Posterior vena cava (tissue), 2 donors: ENCODE measurements at regions of chr6 and their contacts with region 1.

Region 1: GRCh38 chr6:1179571-1180459 is 132.1 kb upstream of the FOXQ1 start:
- DNase-seq: no peak

Region 2: GRCh38 chr6:599576-600448 is 580.0 kb before region 1 on chr6:
- intact Hi-C with region 1: loop called in 1 of 2 experiments (anchors 5 kb)
- DNase-seq: no peak

Region 3: DNA sequence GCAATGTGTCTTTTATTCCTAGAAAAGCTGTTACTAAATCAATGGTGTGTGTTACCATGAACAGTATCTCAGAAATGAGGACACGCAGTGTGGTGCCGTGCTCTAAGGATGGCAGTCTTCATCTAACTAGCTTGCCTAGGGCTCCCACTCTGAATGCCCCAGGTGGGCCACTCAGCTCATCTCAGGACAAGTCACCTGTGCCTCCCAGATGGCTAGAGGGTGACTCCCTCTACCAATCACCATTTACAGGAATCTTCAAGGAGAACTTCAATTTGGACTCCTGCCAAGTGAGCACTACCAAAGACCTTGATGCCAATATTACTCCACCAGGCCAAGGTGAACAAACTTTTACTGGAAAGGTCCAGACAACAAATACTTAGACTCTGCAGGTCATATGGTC is 70.7 kb before region 1 on chr6:
- intact Hi-C with region 1: loop called in 1 of 2 experiments (anchors 2 kb)
- DNase-seq: no peak